ENCODE measurements at regions of chr7 and their contacts with region 1.

Region 1: DNA sequence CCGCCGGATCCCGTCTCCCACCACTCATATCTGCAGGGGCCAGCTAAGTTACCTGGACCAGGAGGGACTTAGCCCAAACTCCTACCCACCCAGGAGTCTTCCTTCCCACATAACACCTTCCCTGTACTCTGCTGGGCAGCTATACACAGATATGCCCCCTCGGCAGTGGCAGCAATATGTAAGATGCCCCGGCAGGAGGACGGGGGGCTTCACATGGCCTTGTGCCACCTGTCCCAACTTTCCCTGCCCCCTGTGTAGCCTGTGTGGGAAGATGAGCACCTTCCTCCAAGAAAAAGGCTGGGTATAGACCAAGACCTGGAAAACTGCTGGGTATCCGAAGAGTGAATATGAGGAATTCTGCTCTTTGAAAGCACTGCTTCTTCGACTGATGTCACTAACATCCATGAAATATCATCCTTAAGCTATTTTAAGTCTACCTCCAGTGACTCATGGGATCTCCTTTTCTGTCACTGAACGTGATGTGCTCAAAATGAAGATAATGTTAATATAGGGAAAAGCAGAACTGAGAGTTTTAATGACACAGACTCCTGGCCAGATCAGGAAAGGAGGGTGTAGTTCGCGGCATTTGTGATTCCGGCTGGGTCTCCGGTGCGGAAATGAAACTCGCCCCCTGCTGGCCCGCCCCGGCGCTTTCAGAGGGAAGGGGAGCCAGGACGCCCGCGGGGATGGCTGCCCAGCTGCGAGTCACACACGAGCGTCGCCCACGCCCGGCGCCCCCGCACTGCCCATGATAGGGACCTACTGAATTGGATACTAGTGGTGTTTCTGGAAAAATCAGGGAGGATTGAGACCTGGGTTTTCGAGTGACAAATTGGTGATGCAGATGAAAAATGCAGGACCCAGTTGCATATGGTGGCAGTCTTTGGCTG is 256.9 kb upstream of the NFE2L3 start:
- DNase-seq: peak; percentile 2
- ATAC-seq: peak; percentile 69
- H3K4me3 ChIP-seq: peak overlapping the region; percentile 33; the same call in 1 of the 2 replicates
- H3K27ac ChIP-seq: no peak overlapping the region
- H3K4me1 ChIP-seq: no peaks in the 10 kb centered on the region
- H3K27me3 ChIP-seq: peaks cover 25% of the 10 kb centered on the region
- CTCF ChIP-seq: peak; percentile 50
- POLR2A ChIP-seq: no peak
- RAD21 ChIP-seq: no peak

Region 2: GRCh38 chr7:26061688-26062150 is 166.6 kb after region 1 on chr7:
- CTCF ChIA-PET with region 1: interaction called, 3 read pairs
- POLR2A ChIA-PET with region 1: no interaction called
- dilution Hi-C with region 1: no loop called
- in situ Hi-C with region 1: no loop called
- intact Hi-C with region 1: loop called (anchors 1 kb)
- DNase-seq: peak; percentile 7
- ATAC-seq: peak; percentile 67
- H3K4me3 ChIP-seq: no peak overlapping the region
- H3K27ac ChIP-seq: no peak overlapping the region
- H3K4me1 ChIP-seq: no peaks in the 10 kb centered on the region
- H3K27me3 ChIP-seq: 0 out of 2 replicates have a peak, but pooled peaks cover under 1% of the 10 kb centered on the region
- CTCF ChIP-seq: peak; percentile 62
- POLR2A ChIP-seq: no peak
- RAD21 ChIP-seq: peak; percentile 28

Region 3: DNA sequence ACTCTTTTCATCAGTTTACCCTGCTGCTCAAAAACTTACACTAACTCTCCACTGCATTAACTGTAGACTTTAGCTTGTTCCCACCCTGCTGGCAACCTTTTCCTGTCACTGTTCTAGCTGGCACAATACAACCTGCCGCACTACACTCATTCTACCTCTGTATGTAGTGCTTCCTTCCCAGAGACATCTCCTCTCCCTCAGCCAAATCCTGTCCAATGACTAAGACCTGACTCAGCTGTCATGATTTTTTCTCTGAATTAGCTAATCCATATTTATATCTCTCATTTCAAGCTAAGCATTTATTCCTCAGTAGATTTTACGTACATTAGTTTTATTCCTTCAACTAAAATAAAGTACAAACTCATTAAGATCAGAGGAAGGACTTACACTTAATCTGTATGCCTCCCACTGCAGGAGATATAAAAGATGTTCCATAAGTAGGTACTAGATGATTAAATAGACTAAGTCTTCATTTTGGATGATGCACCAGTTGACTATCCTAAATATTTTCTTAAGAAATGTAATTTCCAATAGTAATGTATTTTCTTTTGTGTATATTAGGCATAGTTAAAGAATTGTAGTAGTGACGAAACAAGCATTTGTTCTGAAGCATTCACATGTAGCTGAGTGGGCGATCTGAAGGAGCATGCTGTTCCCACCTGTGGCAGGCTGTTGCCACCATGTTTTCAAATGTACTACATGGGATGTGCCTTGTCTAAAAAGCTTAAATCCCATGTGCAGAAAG is 780.2 kb after region 1 on chr7:
- CTCF ChIA-PET with region 1: no interaction called
- POLR2A ChIA-PET with region 1: no interaction called
- dilution Hi-C with region 1: no loop called
- in situ Hi-C with region 1: loop called (anchors 10 kb)
- intact Hi-C with region 1: no loop called
- DNase-seq: peak; percentile 84
- ATAC-seq: peak; percentile 85
- H3K4me3 ChIP-seq: no peak overlapping the region
- H3K27ac ChIP-seq: no peak overlapping the region
- H3K4me1 ChIP-seq: peaks cover 5% of the 10 kb centered on the region
- H3K27me3 ChIP-seq: no peaks in the 10 kb centered on the region
- CTCF ChIP-seq: no peak
- POLR2A ChIP-seq: no peak
- RAD21 ChIP-seq: no peak

Region 4: GRCh38 chr7:27160546-27161213 is 1265.5 kb after region 1 on chr7:
- CTCF ChIA-PET with region 1: interaction called, 6 read pairs
- POLR2A ChIA-PET with region 1: no interaction called
- dilution Hi-C with region 1: no loop called
- in situ Hi-C with region 1: no loop called
- intact Hi-C with region 1: loop called (anchors 2 kb)
- DNase-seq: peak; percentile 77
- ATAC-seq: peak; percentile 89
- H3K4me3 ChIP-seq: peak overlapping the region; percentile 55
- H3K27ac ChIP-seq: no peak overlapping the region
- H3K4me1 ChIP-seq: peaks cover 1% of the 10 kb centered on the region; the same call in 1 of the 2 replicates
- H3K27me3 ChIP-seq: peaks cover 28% of the 10 kb centered on the region
- CTCF ChIP-seq: peak; percentile 95
- POLR2A ChIP-seq: no peak
- RAD21 ChIP-seq: peak; percentile 96

Measured in IMR-90 (cell line).